BJ (cell line): ENCODE measurements at regions of chr7 and their contacts with region 1.

Region 1: GRCh38 chr7:13724191-13724976 is 265.1 kb downstream of the ETV1 start:
- DNase-seq: no peak
- H3K4me3 ChIP-seq: no peak overlapping the region
- H3K27me3 ChIP-seq: no peaks in the 10 kb centered on the region
- CTCF ChIP-seq: no peak

Region 2: GRCh38 chr7:13708675-13709074 is 15.7 kb before region 1 on chr7:
- CTCF ChIA-PET with region 1: no interaction called
- POLR2A ChIA-PET with region 1: interaction called, 21 read pairs
- DNase-seq: no peak
- H3K4me3 ChIP-seq: no peak overlapping the region
- H3K27me3 ChIP-seq: no peaks in the 10 kb centered on the region
- CTCF ChIP-seq: no peak

Region 3: GRCh38 chr7:13790611-13791010 is 66.2 kb after region 1 on chr7:
- CTCF ChIA-PET with region 1: no interaction called
- POLR2A ChIA-PET with region 1: no interaction called
- DNase-seq: no peak
- H3K4me3 ChIP-seq: no peak overlapping the region
- H3K27me3 ChIP-seq: no peaks in the 10 kb centered on the region
- CTCF ChIP-seq: no peak